A549 (cell line): ENCODE measurements at regions of chr19 and their contacts with region 1.

Region 1: DNA sequence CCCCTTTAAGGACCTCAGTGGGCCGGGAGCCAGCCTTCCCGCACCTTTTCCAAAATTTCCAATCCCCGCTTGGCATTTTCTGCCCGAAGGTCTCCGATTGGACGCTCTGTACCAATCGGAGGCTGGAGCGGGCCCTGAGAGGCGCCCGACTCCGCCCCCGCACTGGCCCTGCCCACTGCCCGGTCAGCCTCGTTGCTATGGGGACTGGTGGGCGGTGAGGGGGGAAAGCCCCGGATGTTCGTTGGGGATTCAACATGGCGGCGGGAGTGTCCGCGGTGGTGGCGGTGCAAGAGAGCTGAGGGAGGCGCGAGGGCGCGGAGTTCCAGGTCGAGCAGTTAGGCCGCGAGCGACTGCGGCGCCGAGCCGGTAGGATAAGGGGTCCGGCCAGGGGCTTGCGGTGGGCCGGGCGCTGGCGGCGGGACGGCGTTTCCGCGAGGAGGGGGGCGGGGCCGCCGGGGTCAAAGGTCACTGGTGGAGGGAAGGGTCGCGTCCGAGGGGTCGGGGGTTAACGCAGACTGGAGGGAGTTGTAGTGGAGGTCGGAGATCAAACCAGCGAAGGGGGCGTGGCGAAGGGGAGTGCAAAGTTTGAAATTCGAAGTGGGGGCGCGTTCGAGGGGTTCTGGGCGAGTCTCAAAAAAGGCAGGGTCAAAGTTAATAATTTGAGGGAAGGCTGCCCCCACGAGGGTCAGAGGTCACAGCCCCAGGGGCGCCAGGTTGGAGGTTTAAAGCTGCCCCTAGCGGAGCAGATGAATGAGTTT is at the start of gene PAK4:
- DNase-seq: peak; percentile 99 to 100
- ATAC-seq: peak; percentile 81 to 89
- H3K4me3 ChIP-seq: peak within 1 kb of the TSS; percentile 84
- H3K27ac ChIP-seq: peak within 1 kb of the TSS; percentile 92 to 94
- H3K4me1 ChIP-seq: peaks cover 61% of the 10 kb centered on the region
- CTCF ChIP-seq: no peak
- EP300 ChIP-seq: no peak
- POLR2A ChIP-seq: peak; percentile 95
- RAD21 ChIP-seq: peak in 1 of 2 experiments; percentile 23; a peak in 1 of 5 replicates
- polyA plus RNA-seq, gene PAK4: 37.9 and 42.9 TPM in 2 replicates

Region 2: DNA sequence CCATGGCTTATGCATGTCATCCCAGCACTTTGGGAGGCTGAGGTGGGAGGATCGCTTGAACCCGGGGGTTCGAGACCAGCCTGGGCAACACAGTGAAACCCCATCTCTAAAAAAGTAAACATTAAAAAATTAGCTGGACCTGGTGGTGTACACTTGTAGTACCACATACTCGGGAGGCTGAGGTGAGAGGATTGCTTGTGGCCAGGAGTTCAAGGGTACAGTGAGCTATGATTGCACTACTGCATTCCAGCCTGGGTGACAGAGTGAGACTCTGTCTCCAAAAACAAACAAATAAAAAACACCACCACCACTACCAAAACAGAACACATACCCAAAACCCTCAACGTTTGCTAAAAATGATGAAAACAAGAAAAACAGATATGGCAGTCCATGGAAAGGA is 166.1 kb before region 1 on chr19:
- CTCF ChIA-PET with region 1: interaction called, 39 read pairs
- POLR2A ChIA-PET with region 1: no interaction called
- DNase-seq: no peak
- ATAC-seq: no peak
- H3K4me3 ChIP-seq: no peak overlapping the region
- H3K27ac ChIP-seq: no peak overlapping the region
- H3K4me1 ChIP-seq: peaks cover 11% of the 10 kb centered on the region
- CTCF ChIP-seq: no peak
- EP300 ChIP-seq: no peak
- POLR2A ChIP-seq: no peak
- RAD21 ChIP-seq: no peak

Region 3: GRCh38 chr19:38989066-38989605 is 136.6 kb before region 1 on chr19:
- CTCF ChIA-PET with region 1: no interaction called
- POLR2A ChIA-PET with region 1: no interaction called
- DNase-seq: peak in 1 of 2 experiments; percentile 55
- ATAC-seq: peak; percentile 72 to 76
- H3K4me3 ChIP-seq: no peak overlapping the region
- H3K27ac ChIP-seq: peak overlapping the region; percentile 21 to 71; a peak in 3 of 6 replicates
- H3K4me1 ChIP-seq: peaks cover 37% of the 10 kb centered on the region
- CTCF ChIP-seq: no peak
- EP300 ChIP-seq: no peak
- POLR2A ChIP-seq: no peak
- RAD21 ChIP-seq: no peak

Region 4: GRCh38 chr19:39031368-39032062 is 94.2 kb before region 1 on chr19:
- CTCF ChIA-PET with region 1: no interaction called
- POLR2A ChIA-PET with region 1: no interaction called
- DNase-seq: peak; percentile 99
- ATAC-seq: peak; percentile 92 to 96
- H3K4me3 ChIP-seq: peak overlapping the region; percentile 53
- H3K27ac ChIP-seq: peak overlapping the region; percentile 83 to 92
- H3K4me1 ChIP-seq: peaks cover 25% of the 10 kb centered on the region
- CTCF ChIP-seq: no peak
- EP300 ChIP-seq: no peak
- POLR2A ChIP-seq: peak; percentile 83
- RAD21 ChIP-seq: no peak; a peak in 1 of 5 replicates

Region 5: DNA sequence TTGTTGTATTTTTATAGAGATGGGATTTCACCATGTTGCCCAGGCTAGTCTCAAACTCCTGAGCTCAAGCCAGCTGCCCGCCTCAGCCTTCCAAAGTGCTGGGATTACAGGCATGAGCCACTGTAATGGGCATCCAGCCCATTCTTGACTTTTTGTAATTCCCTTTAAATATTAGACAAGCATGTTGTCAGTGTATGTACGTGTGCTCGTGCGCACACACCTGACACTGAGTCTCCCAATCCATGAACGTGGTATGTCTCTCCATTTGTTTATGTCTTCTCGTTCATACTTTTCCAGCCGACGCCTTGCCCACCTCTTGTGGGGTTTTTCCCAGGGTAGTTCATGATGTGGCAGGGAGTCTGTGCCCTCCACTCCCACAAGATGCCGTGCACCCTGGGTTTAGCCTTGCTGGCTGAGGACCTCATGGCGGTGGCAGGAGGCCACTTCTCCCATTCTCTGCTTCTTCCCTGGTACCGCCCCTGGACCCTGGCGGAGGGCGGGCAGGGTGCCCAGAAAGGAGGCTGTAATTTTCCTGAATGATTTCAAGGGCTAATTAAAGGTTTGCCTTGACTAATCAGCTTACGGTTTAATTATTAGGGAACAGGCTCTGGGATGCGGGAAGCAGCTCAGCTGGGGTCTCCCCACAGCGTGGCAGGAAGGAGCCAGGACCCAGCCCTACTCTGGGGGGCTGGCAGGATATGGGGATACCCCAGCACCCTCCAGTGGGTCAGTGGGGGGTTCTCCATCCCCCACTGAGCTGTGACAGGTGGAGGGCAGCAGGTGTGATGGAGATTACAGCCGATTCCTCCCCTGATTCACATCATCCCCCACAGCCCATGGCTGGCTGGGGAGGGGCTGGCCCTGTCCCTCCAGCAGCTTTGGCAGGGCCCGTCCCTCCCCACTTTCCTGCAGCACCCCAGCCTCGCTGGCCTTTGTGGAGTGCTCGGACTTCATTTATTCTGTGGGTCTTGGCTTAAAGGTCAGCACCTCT is 12.8 kb after region 1 on chr19:
- CTCF ChIA-PET with region 1: interaction called, 22 read pairs
- POLR2A ChIA-PET with region 1: no interaction called
- DNase-seq: no peak
- ATAC-seq: no peak
- H3K4me3 ChIP-seq: no peak overlapping the region
- H3K27ac ChIP-seq: peak overlapping the region in 1 of 2 experiments; percentile 64; a peak in 3 of 6 replicates
- H3K4me1 ChIP-seq: peaks cover 52% of the 10 kb centered on the region
- CTCF ChIP-seq: no peak
- EP300 ChIP-seq: no peak
- POLR2A ChIP-seq: no peak
- RAD21 ChIP-seq: no peak

Region 6: GRCh38 chr19:39150845-39151600 is 25.3 kb after region 1 on chr19:
- CTCF ChIA-PET with region 1: interaction called, 18 read pairs
- POLR2A ChIA-PET with region 1: interaction called, 3 read pairs
- DNase-seq: no peak
- ATAC-seq: no peak
- H3K4me3 ChIP-seq: no peak overlapping the region
- H3K27ac ChIP-seq: no peak overlapping the region
- H3K4me1 ChIP-seq: peaks cover 16% of the 10 kb centered on the region
- CTCF ChIP-seq: no peak
- EP300 ChIP-seq: no peak
- POLR2A ChIP-seq: no peak
- RAD21 ChIP-seq: no peak

Region 7: GRCh38 chr19:39182174-39182505 is 56.4 kb after region 1 on chr19:
- CTCF ChIA-PET with region 1: interaction called, 27 read pairs
- POLR2A ChIA-PET with region 1: no interaction called
- DNase-seq: no peak
- ATAC-seq: peak; percentile 6 to 20; a peak in 4 of 6 replicates
- H3K4me3 ChIP-seq: no peak overlapping the region
- H3K27ac ChIP-seq: peak overlapping the region in 1 of 2 experiments; percentile 9; a peak in 2 of 6 replicates
- H3K4me1 ChIP-seq: no peaks in the 10 kb centered on the region
- CTCF ChIP-seq: no peak
- EP300 ChIP-seq: no peak
- POLR2A ChIP-seq: no peak
- RAD21 ChIP-seq: no peak

Region 8: GRCh38 chr19:39193803-39194202 is 68.1 kb after region 1 on chr19:
- CTCF ChIA-PET with region 1: interaction called, 14 read pairs
- POLR2A ChIA-PET with region 1: no interaction called
- DNase-seq: peak; percentile 84 to 92
- ATAC-seq: peak; percentile 67 to 82
- H3K4me3 ChIP-seq: no peak overlapping the region
- H3K27ac ChIP-seq: peak overlapping the region; percentile 45 to 71
- H3K4me1 ChIP-seq: peaks cover 55% of the 10 kb centered on the region
- CTCF ChIP-seq: no peak
- EP300 ChIP-seq: peak in 1 of 2 experiments; percentile 49; a peak in 1 of 5 replicates
- POLR2A ChIP-seq: peak; percentile 16; the same call in 1 of the 2 replicates
- RAD21 ChIP-seq: no peak; a peak in 1 of 5 replicates